Colonic mucosa (tissue), 4 donors: ENCODE measurements at regions of chr9 and their contacts with region 1.

Region 1: DNA sequence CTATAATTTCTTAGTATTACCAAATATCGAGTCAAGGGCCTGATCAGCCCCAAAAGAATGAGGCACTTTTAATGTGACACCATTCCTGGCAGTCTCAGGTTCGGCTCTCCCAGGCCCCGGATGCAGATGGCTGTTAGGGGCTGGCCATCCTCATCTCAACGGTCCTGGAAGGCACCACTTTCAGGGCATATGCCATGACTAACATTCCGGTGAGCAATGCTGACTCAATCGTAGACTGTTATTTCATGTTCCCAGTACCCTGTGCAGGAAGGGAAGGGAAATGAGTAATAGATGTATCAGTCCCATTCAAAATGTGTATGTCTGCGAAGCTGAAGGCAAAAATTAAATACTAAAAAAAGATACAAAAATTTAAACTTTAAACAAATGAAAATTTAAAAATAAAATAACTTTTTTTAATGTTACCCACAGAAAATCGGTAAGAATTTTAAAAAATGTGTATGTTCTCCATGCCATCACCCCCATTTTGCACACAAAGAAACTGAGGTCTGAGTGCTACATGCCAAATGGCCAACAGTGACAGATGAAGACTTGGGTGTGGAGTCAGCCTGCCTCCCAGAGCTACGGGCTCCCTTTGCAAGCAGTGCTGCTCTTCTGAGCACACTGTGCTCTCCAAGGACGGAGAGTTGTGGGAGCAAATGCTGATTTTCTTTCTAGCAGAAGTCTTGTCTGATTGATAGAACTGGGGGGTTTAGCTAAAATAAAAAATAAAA is 79.0 kb downstream of the GLDC start:
- DNase-seq: no peak
- H3K4me3 ChIP-seq: no peak overlapping the region
- H3K27ac ChIP-seq: no peak overlapping the region
- H3K4me1 ChIP-seq: no peaks in the 10 kb centered on the region
- H3K27me3 ChIP-seq: no peaks in the 10 kb centered on the region
- CTCF ChIP-seq: no peak

Region 2: DNA sequence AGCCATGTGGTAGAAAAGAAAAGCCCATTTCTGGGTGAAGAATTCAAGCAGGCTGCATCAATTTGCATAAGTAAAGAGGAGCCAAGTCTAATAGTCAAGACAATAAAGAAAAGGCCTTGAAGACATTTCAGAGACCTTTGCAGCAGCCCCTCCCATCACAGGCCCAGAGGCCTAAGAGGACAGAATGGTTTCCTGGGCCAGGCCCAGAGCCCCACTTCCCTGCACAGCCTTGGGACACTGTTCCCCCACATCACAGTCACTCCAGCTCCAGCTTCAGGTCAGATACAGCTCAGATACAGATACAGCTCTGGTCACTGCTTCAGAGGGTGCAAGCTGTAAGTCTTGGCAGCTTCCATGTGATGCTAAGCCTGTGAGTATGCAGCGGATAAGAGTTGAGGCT is 1158.0 kb before region 1 on chr9:
- intact Hi-C with region 1: no loop called
- DNase-seq: no peak
- H3K4me3 ChIP-seq: no peak overlapping the region
- H3K27ac ChIP-seq: no peak overlapping the region
- H3K4me1 ChIP-seq: no peaks in the 10 kb centered on the region
- H3K27me3 ChIP-seq: no peaks in the 10 kb centered on the region
- CTCF ChIP-seq: no peak

Region 3: DNA sequence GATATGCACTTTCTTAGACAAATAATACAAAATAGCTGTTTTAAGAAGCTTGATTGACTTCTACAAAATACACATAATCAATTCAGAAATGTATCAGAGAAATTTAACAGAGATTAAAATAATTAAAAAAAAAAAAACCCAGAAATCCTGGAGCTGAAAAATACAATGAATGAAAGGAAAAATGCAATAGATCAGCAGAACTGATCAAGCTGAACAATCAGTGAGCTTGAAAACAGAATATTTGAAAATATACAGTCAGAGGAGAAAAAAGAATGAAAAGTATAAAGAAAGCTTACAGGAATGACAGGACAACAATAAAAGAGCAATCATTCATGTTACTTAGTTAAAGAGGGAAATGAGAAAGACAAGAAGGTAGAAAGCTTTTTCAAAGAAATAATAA is 392.7 kb before region 1 on chr9:
- intact Hi-C with region 1: no loop called
- DNase-seq: no peak
- H3K4me3 ChIP-seq: no peak overlapping the region
- H3K27ac ChIP-seq: no peak overlapping the region
- H3K4me1 ChIP-seq: no peaks in the 10 kb centered on the region
- H3K27me3 ChIP-seq: no peaks in the 10 kb centered on the region
- CTCF ChIP-seq: no peak

Region 4: DNA sequence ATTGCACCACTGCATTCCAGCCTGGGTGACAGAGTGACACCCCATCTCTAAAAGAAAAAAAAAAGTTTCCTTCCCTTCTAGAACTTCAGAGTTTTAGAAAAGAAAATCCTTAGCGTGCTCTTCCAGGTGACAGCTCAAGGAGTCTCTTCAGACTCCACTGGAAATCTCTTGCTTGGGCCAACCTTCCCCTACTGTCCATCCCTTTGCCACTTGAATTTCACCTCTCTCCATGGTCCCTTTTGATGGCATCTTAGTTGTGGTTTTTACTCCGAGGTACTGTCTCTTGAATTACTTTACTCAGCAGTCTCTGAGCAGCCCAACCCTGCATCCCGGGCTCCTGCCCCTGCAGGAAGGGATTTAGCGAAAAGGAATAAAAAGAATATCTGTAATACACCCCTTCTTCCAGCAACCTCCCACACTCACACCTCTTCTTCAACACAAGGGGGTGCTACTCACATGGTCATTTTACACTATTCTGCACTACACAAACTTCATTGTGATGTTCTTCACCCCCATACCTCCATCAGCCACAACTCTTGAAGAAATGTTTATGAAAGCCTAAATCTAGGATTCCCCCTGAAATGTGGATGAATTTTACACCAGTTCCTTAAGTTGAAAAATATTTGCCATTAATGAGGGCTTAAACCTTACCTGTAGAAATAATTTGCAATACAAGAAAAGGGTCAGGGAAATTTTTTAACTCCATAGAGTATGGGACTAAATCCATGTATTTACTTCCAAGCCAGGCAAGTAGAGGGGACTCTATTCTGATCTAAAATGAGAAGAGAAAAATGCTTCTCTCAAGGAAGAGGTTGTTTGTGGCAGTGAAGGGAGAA is 212.5 kb before region 1 on chr9:
- intact Hi-C with region 1: loop called (anchors 2 kb)
- DNase-seq: peak; percentile 20
- H3K4me3 ChIP-seq: no peak overlapping the region
- H3K27ac ChIP-seq: no peak overlapping the region
- H3K4me1 ChIP-seq: no peaks in the 10 kb centered on the region
- H3K27me3 ChIP-seq: no peaks in the 10 kb centered on the region
- CTCF ChIP-seq: peak; percentile 74

Region 5: DNA sequence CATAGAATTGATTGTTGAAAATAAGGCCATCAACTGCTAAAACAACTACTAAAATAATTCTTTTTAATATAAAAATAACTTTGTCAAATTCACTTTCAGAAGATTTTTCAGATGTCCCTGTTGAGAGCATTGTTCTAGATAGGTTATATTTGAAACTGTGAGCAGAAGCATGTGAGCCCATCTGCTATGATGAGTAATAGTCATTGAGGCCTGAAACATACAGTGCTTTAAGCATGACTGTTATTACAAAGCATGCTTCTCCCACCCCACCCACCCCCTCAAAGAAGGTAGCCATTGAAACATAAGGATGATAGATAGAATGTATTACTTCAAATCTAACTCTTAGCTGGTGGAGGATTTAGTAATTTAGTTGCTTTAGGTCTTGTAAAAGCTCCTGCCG is 67.6 kb before region 1 on chr9:
- intact Hi-C with region 1: loop called (anchors 10 kb)
- DNase-seq: no peak
- H3K4me3 ChIP-seq: no peak overlapping the region
- H3K27ac ChIP-seq: no peak overlapping the region
- H3K4me1 ChIP-seq: no peaks in the 10 kb centered on the region
- H3K27me3 ChIP-seq: no peaks in the 10 kb centered on the region
- CTCF ChIP-seq: no peak

Region 6: DNA sequence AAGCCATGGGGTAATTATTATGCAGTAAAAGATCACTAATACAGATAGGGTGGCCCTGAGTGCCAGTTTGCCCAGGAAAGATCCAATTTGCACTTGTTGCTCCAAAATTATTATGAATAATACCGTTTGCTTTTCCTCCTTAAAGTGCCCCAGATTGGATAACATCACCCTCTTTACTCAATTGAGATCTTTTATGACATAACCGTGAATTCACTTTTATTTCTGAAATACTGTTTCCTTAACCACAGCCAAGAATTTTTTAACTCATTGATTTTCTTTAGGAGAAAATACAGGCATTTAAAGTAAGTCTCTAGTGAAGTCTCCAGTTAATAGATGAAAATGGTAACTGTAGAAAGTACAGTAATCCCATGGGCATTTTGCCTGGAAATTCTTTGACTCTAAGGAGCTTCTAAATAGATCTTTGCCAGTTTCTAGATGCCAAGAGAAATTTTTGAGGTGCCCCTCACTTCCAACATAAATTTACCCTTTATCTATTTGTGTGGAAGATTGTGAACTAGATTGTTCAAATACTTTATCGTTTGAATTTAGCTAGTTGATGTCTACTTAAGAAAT is 54.4 kb before region 1 on chr9:
- intact Hi-C with region 1: no loop called
- DNase-seq: no peak
- H3K4me3 ChIP-seq: no peak overlapping the region
- H3K27ac ChIP-seq: no peak overlapping the region
- H3K4me1 ChIP-seq: no peaks in the 10 kb centered on the region
- H3K27me3 ChIP-seq: no peaks in the 10 kb centered on the region
- CTCF ChIP-seq: no peak